ENCODE measurements at regions of chr19 and their contacts with region 1.

Region 1: DNA sequence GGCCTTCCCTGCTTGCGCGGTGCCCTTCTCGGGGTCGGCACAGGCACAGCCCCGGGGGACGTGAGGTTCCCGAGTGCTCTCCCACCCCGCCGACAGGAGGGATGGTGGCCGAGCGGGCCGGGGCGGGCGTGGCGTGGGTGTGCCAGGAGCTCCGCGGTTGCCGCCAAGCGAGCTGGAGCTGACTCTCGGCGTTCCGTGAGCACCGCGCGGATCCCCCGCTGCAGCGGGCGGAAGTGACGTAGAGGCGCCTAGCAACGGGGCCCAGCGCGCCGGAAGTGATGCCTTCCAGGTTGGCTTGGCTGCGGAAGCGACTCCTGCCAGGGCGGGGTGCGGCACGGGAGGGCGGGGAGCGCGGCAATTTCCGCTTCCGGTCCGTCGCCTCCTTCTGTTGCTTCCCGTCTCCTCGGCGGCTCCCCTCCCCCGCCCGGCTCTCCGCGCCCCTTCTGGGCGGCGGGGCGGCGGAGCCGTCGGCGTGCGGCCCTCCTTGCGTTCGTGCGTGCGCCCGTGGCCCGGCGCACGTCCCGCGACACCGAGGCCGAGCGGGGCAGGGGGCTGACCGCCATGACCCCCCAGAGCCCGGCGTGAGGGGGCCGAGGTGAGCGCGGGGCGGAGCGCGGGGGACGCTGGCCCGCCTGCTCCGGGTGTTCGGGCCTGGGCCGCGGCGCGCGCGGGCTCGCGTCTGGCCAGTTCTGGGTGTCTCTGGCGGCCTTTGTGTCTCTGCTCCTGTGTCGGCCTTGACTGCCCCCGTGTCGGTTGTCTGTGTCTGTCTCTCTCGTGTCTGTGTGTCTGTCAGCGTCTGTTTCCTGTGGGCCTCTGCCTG is at the start of gene EPN1:
- DNase-seq: peak; percentile 95 to 99
- H3K4me3 ChIP-seq: peak within 1 kb of the TSS; percentile 97
- CTCF ChIP-seq: no peak
- POLR2A ChIP-seq: no peak
- total RNA-seq, gene EPN1: 81.2 to 189 (median 120) TPM

Region 2: DNA sequence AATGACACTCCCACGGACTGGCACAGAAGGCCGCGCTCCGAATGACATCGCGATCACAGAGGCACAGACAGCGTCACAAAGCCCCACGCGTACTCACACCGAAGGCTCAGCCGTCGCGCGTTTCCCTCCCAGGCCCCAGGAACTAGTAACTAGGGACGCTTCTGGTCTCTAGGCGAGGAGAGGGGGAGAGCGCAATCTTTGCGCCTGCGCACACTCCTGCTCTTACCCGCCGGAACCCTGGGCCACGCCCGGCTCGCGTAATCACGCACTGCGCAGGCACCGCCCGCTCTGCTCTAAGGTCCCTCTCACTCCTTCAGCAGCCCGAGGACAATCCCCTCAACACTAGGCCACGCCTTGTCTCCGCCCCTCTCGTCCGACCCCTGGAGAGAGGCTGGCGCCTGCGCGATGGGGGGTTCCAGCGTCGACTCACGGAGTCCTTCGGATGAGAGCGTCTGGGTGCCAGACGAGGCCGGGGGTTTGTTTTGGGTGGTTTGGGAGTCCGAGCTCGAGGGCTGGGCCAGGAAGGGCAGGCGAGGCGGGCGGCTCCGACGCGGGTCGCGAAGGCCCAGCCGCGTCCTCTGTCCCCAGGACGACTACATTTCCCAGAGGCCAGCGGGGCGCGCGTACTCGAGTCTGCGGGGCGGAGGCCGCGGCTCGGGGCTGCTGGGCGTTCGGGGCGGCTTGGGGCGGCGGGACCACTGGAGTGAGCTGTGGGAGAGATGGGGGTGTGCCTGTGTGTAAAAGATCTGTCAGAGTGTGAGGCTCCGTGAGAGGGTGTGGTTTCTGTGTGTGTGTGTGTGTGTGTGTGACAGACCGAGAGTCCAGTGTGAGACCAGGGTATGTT is 832.6 kb after region 1 on chr19 and contains the start of gene ZNF471:
- intact Hi-C with region 1: loop called (anchors 5 kb)
- DNase-seq: peak; percentile 97 to 99
- H3K4me3 ChIP-seq: peak within 1 kb of the TSS; percentile 54
- CTCF ChIP-seq: no peak
- POLR2A ChIP-seq: no peak
- total RNA-seq, gene ZNF471: 1.5 to 3.2 (median 2.7) TPM

Measured in lower leg skin (tissue), 4 donors.